CD4-positive, alpha-beta memory T cell (primary cell): ENCODE measurements at regions of chr6 and their contacts with region 1.

Region 1: GRCh38 chr6:26122793-26123674 is 35.8 kb downstream of the HFE start:
- DNase-seq: peak; percentile 94 to 98 (median 98)
- H3K4me3 ChIP-seq: peak overlapping the region; percentile 87 to 98
- H3K4me3 Mint-ChIP-seq: peak overlapping the region; percentile 96 to 100 (median 100)
- H3K27ac ChIP-seq: peak overlapping the region; percentile 89
- H3K27ac Mint-ChIP-seq: peak overlapping the region; percentile 97 to 99 (median 99)
- H3K4me1 ChIP-seq: peaks cover 26% of the 10 kb centered on the region
- H3K4me1 Mint-ChIP-seq: peaks cover 20 to 54% (median 30%) of the 10 kb centered on the region in 4 donors
- H3K27me3 ChIP-seq: no peaks in the 10 kb centered on the region
- H3K27me3 Mint-ChIP-seq: peaks cover 0 to 3% of the 10 kb centered on the region in 2 donors

Region 2: GRCh38 chr6:26045065-26045927 is 77.7 kb before region 1 on chr6:
- CTCF ChIA-PET with region 1: interaction called, 10 read pairs
- POLR2A ChIA-PET with region 1: interaction called, 262 read pairs
- intact Hi-C with region 1: loop called (anchors 1 kb)
- DNase-seq: peak; percentile 88 to 91 (median 90)
- H3K4me3 ChIP-seq: peak overlapping the region; percentile 72 to 74
- H3K4me3 Mint-ChIP-seq: peak overlapping the region; percentile 88 to 98 (median 94)
- H3K27ac ChIP-seq: peak overlapping the region; percentile 76
- H3K27ac Mint-ChIP-seq: peak overlapping the region; percentile 93 to 99 (median 98)
- H3K4me1 ChIP-seq: peaks cover 14% of the 10 kb centered on the region
- H3K4me1 Mint-ChIP-seq: peaks cover 12 to 28% (median 20%) of the 10 kb centered on the region in 4 donors
- H3K27me3 ChIP-seq: no peaks in the 10 kb centered on the region
- H3K27me3 Mint-ChIP-seq: no peaks in the 10 kb centered on the region

Region 3: GRCh38 chr6:26097268-26097875 is 25.7 kb before region 1 on chr6:
- CTCF ChIA-PET with region 1: interaction called, 22 read pairs
- POLR2A ChIA-PET with region 1: interaction called, 290 read pairs
- intact Hi-C with region 1: no loop called
- DNase-seq: peak; percentile 61 to 68 (median 66)
- H3K4me3 ChIP-seq: no peak overlapping the region
- H3K4me3 Mint-ChIP-seq: no peak overlapping the region
- H3K27ac ChIP-seq: no peak overlapping the region
- H3K27ac Mint-ChIP-seq: peak overlapping the region in 1 of 7 donors; percentile 43
- H3K4me1 ChIP-seq: no peaks in the 10 kb centered on the region
- H3K4me1 Mint-ChIP-seq: peaks cover 0 to 5% (median 5%) of the 10 kb centered on the region in 4 donors
- H3K27me3 ChIP-seq: no peaks in the 10 kb centered on the region
- H3K27me3 Mint-ChIP-seq: peaks cover 2% of the 10 kb centered on the region in 2 donors

Region 4: GRCh38 chr6:26175428-26176181 is 52.6 kb after region 1 on chr6:
- CTCF ChIA-PET with region 1: interaction called, 19 read pairs
- POLR2A ChIA-PET with region 1: interaction called, 268 read pairs
- intact Hi-C with region 1: loop called (anchors 1 kb)
- DNase-seq: peak; percentile 50 to 73 (median 70)
- H3K4me3 ChIP-seq: no peak overlapping the region
- H3K4me3 Mint-ChIP-seq: peak overlapping the region in 4 of 8 donors; percentile 37 to 70 (median 65)
- H3K27ac ChIP-seq: no peak overlapping the region
- H3K27ac Mint-ChIP-seq: peak overlapping the region; percentile 28 to 89 (median 78)
- H3K4me1 ChIP-seq: peaks cover 37% of the 10 kb centered on the region
- H3K4me1 Mint-ChIP-seq: peaks cover 21 to 40% (median 27%) of the 10 kb centered on the region in 4 donors
- H3K27me3 ChIP-seq: no peaks in the 10 kb centered on the region
- H3K27me3 Mint-ChIP-seq: no peaks in the 10 kb centered on the region

Region 5: DNA sequence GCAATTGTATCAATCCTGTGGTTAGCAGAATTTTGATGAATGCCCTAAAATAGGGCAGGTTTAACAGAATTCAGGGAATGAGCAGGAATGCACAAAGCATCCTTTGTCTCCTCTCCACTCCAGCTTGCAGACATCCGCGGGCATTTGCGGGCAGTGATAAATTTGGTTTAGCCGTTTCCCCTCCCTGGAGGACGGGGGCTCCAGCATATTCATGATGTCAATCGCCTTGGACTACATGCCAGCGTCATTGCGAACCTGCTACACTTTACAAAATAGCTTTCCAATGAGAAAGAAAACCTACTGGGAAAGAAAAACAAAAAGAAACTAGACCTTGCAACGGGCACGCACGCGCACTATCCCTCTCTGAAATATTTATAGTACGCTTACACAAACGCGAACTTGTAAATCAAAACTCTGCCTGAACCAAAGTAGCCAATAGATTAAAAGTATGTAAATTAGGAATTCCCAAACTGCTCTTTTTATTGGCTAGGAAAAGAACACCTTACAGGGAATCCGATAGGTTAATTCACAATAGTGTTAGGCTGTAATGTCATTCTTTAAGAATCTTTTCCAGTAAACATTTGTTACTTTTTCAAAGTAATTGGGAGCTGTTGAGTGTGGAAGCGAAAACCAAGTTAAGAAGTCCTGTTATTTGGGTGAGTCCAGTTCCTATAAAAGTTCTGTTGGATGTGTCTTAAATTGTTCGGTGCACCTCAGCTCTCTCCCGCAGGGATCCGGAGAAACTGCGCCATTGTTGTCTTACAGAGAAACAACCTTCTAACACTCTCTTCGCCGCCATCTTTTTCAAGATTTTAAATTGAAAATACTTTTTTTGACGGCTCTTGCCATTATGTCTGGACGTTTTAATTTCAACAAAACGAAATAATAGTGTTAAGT is 100.9 kb after region 1 on chr6:
- CTCF ChIA-PET with region 1: no interaction called
- POLR2A ChIA-PET with region 1: interaction called, 268 read pairs
- intact Hi-C with region 1: no loop called
- DNase-seq: peak; percentile 74 to 87 (median 84)
- H3K4me3 ChIP-seq: peak overlapping the region; percentile 45 to 82
- H3K4me3 Mint-ChIP-seq: no peak overlapping the region
- H3K27ac ChIP-seq: peak overlapping the region; percentile 69
- H3K27ac Mint-ChIP-seq: no peak overlapping the region
- H3K4me1 ChIP-seq: peaks cover 21% of the 10 kb centered on the region
- H3K4me1 Mint-ChIP-seq: peaks cover 6 to 8% (median 7%) of the 10 kb centered on the region in 4 donors
- H3K27me3 ChIP-seq: no peaks in the 10 kb centered on the region
- H3K27me3 Mint-ChIP-seq: no peaks in the 10 kb centered on the region

Region 6: DNA sequence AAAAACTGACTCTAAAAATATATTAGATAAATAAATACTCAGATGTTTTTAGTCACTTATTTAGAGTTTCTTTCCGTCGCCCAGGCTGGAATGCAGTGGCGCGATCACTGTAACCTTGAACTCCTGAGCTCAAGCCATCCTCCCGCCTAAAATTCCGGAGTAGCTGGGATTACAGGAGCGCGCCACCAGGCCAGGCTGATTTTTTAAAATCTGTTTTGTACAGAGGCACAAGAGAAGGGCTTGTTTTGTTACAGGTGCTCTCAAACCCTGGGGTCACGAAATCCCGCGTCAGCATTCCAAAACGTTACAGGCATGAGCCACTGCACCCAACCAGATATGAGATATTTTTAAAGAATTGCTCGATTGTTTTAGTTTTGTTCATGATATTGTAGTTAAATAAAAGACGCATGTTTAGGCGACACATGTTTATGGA is 201.3 kb after region 1 on chr6:
- CTCF ChIA-PET with region 1: no interaction called
- POLR2A ChIA-PET with region 1: no interaction called
- intact Hi-C with region 1: no loop called
- DNase-seq: no peak
- H3K4me3 ChIP-seq: no peak overlapping the region
- H3K4me3 Mint-ChIP-seq: peak overlapping the region in 1 of 8 donors; percentile 4
- H3K27ac ChIP-seq: no peak overlapping the region
- H3K27ac Mint-ChIP-seq: peak overlapping the region in 1 of 7 donors; percentile 98
- H3K4me1 ChIP-seq: peaks cover 12% of the 10 kb centered on the region
- H3K4me1 Mint-ChIP-seq: peaks cover 21 to 34% (median 27%) of the 10 kb centered on the region in 4 donors
- H3K27me3 ChIP-seq: no peaks in the 10 kb centered on the region
- H3K27me3 Mint-ChIP-seq: peaks cover 6 to 21% of the 10 kb centered on the region in 2 donors

Region 7: DNA sequence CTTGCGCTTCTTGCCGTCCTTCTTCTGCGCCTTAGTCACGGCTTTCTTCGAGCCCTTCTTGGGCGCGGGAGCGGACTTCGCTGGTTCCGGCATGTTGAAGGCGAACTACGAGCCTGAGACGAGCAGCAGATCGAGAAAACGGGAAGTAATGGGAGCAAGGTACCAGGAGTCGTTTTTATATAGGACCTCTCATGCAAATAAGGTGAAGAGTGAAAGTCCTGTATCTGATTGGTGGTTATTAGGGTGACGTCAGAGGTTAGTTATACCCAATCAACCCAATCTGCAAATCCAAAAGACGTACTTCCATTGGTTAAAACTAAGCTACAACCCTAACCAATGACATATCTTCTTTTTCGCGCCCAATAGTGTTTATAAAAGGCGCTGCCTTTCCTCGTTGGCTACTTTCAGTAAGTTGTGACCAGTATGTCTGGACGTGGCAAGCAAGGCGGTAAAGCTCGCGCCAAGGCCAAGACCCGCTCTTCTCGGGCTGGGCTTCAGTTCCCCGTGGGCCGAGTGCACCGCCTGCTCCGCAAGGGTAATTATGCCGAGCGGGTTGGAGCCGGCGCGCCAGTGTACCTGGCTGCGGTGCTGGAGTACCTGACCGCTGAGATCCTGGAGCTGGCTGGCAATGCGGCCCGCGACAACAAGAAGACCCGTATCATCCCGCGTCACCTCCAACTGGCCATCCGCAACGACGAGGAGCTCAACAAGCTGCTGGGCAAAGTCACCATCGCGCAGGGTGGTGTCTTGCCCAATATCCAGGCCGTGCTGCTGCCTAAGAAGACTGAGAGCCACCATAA is 1023.9 kb after region 1 on chr6:
- CTCF ChIA-PET with region 1: no interaction called
- POLR2A ChIA-PET with region 1: interaction called, 72 read pairs
- intact Hi-C with region 1: loop called (anchors 2 kb)
- DNase-seq: peak; percentile 85 to 96 (median 94)
- H3K4me3 ChIP-seq: peak overlapping the region; percentile 76 to 77
- H3K4me3 Mint-ChIP-seq: no peak overlapping the region
- H3K27ac ChIP-seq: peak overlapping the region; percentile 97
- H3K27ac Mint-ChIP-seq: no peak overlapping the region
- H3K4me1 ChIP-seq: peaks cover 22% of the 10 kb centered on the region
- H3K4me1 Mint-ChIP-seq: peaks cover 10 to 20% (median 13%) of the 10 kb centered on the region in 4 donors
- H3K27me3 ChIP-seq: no peaks in the 10 kb centered on the region
- H3K27me3 Mint-ChIP-seq: no peaks in the 10 kb centered on the region